ENCODE measurements at regions of chr3 and their contacts with region 1.

Region 1: GRCh38 chr3:38346587-38347410 is at the start of gene XYLB:
- DNase-seq: peak; percentile 81
- H3K4me3 ChIP-seq: peak within 1 kb of the TSS; percentile 53 to 96 (median 58)
- H3K27ac ChIP-seq: no peak within 1 kb of the TSS
- H3K4me1 ChIP-seq: no peaks in the 10 kb centered on the region
- H3K27me3 ChIP-seq: no peaks in the 10 kb centered on the region
- CTCF ChIP-seq: peak; percentile 81 to 95
- POLR2A ChIP-seq: peak; percentile 28
- total RNA-seq, gene XYLB: 4.3 and 6.1 TPM in 2 replicates

Region 2: GRCh38 chr3:38117748-38118420 is 228.9 kb before region 1 on chr3:
- CTCF ChIA-PET with region 1: interaction called, 37 read pairs
- POLR2A ChIA-PET with region 1: no interaction called
- dilution Hi-C with region 1: no loop called
- intact Hi-C with region 1: loop called (anchors 1 kb)
- DNase-seq: peak; percentile 63
- H3K4me3 ChIP-seq: no peak overlapping the region
- H3K27ac ChIP-seq: no peak overlapping the region
- H3K4me1 ChIP-seq: no peaks in the 10 kb centered on the region
- H3K27me3 ChIP-seq: no peaks in the 10 kb centered on the region
- CTCF ChIP-seq: peak; percentile 65 to 83
- POLR2A ChIP-seq: no peak

Region 3: DNA sequence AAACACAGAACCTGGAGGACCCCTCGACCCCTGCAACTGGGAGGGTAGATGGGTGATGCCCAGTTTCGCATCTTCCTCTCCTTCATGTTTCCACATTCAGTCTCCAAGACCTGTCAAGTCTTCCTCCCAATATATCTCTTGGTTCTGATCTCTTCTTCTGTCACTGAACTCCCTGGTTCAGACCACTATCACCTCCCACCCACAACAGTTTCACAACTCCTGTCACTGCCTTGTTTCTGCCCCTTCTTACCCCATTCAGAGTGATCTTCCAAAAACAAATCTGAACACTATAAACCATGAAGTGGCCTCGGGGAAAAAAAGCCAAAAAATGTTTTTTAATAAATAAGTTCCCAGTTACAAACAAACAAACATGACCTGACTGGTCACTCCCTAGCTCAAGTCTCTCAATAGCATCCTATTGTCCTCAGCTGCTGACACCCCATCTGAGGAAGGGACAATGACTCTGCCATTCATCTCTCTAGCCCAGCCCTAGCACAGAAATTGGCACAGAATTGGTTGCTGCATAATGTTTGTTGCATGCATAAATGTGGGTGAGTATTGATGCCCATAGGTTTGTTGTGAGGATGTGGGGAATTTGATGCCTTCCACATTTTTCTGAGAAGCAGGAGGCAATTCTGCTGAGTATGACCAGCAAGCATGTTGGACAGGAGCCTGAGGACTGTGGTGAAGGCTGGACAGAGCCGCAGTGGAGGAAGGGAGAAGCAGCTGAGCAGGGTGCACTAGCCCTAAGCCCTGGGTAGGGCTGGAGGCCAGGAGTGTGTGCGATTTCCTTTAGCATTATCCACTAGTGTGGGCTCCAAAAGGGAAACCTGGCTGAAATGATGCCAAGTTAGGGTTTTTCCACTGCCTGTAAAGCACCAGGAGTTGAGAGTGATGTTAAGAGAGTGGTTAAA is 12.4 kb before region 1 on chr3:
- CTCF ChIA-PET with region 1: interaction called, 12 read pairs
- POLR2A ChIA-PET with region 1: no interaction called
- dilution Hi-C with region 1: no loop called
- intact Hi-C with region 1: no loop called
- DNase-seq: no peak
- H3K4me3 ChIP-seq: no peak overlapping the region
- H3K27ac ChIP-seq: no peak overlapping the region
- H3K4me1 ChIP-seq: no peaks in the 10 kb centered on the region
- H3K27me3 ChIP-seq: peaks cover 4 to 6% of the 10 kb centered on the region in 2 experiments
- CTCF ChIP-seq: no peak
- POLR2A ChIP-seq: no peak

Region 4: DNA sequence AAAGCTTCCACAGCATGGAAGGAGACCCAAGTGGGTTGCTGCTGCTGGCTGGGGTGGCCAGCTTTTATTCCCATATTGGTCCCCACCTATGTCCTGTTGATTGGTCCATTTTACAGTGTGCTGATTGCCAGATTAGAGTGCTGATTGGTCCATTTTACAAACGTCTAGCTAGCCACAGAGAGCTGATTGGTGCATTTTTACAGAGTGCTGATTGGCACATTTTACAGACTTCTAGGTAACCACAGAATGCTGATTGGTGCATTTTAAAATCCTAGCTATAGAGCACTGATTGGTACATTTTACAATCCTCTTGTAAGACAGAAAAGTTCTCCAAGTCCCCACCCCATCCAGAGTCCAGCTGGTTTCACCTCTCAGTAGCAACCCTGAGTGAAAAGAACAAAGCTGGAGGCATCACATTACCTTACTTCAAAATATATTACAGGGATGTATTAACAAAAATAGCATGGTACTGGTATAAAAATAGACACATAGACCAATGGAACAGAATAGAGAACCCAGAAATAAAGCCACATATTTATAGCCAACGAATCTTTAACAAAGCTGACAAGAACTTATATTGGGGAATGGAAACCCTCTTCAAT is 99.4 kb after region 1 on chr3:
- CTCF ChIA-PET with region 1: no interaction called
- POLR2A ChIA-PET with region 1: no interaction called
- dilution Hi-C with region 1: no loop called
- intact Hi-C with region 1: no loop called
- DNase-seq: no peak
- H3K4me3 ChIP-seq: no peak overlapping the region
- H3K27ac ChIP-seq: no peak overlapping the region
- H3K4me1 ChIP-seq: no peaks in the 10 kb centered on the region
- H3K27me3 ChIP-seq: no peaks in the 10 kb centered on the region
- CTCF ChIP-seq: no peak
- POLR2A ChIP-seq: no peak

Region 5: DNA sequence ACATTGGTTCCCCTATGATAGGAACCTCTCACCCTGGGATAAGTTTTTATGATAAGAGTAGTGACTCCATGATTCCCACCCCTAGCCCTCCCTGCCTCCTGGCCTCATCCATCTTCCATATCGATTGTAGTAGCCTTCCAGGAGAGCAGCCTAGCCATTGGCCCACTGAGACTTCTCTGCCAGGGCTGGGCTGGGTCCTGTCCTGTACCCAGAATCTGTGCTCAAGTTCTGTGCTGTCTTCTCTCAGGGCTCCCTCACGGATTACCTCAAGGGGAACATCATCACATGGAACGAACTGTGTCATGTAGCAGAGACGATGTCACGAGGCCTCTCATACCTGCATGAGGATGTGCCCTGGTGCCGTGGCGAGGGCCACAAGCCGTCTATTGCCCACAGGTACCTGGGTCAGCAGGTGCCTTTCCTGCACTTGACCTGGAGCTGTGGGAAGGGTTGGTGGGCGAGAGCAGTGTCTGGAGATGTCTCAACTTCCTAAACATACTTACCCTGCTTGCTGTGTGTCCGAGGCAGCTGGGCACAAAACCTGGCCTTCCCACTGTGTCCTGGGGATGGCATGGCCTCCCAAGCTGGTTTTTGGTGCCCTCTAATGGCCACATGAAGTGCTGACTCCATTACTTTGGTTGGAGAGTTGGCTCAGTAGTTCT is 132.8 kb after region 1 on chr3:
- CTCF ChIA-PET with region 1: interaction called, 91 read pairs
- POLR2A ChIA-PET with region 1: no interaction called
- dilution Hi-C with region 1: no loop called
- intact Hi-C with region 1: loop called (anchors 1 kb)
- DNase-seq: peak; percentile 64
- H3K4me3 ChIP-seq: no peak overlapping the region
- H3K27ac ChIP-seq: no peak overlapping the region
- H3K4me1 ChIP-seq: no peaks in the 10 kb centered on the region
- H3K27me3 ChIP-seq: no peaks in the 10 kb centered on the region
- CTCF ChIP-seq: peak; percentile 77 to 84
- POLR2A ChIP-seq: no peak

Region 6: GRCh38 chr3:38651154-38651789 is 304.5 kb after region 1 on chr3:
- CTCF ChIA-PET with region 1: interaction called, 4 read pairs
- POLR2A ChIA-PET with region 1: no interaction called
- dilution Hi-C with region 1: no loop called
- intact Hi-C with region 1: loop called (anchors 10 kb)
- DNase-seq: peak; percentile 71
- H3K4me3 ChIP-seq: no peak overlapping the region
- H3K27ac ChIP-seq: no peak overlapping the region
- H3K4me1 ChIP-seq: peaks cover 10% of the 10 kb centered on the region
- H3K27me3 ChIP-seq: no peaks in the 10 kb centered on the region
- CTCF ChIP-seq: peak; percentile 93 to 100
- POLR2A ChIP-seq: no peak